ENCODE measurements at regions of chrX and their contacts with region 1.

Region 1: DNA sequence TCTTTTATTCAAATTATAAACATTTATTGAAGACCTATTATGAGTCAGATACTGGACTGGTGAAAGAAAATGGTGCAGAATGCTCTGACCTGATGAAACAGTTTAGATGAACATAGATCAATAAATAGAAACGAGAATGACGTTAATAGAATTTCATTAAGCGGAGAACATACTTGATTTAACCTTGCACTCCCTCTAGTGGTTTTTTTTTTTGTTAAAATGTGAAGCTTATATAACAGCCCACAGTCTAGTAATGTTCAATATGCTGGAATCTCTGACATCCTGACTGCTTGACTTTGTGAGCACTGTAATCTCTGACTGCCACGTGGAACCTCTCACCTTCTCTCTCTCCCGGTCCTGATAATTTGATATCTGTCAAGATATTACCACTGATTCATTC is 32.3 kb downstream of the HDAC8 start:
- DNase-seq: no peak
- ATAC-seq: no peak
- H3K4me3 Mint-ChIP-seq: no peak overlapping the region
- H3K27ac Mint-ChIP-seq: no peak overlapping the region
- H3K4me1 Mint-ChIP-seq: no peaks in the 10 kb centered on the region
- H3K27me3 Mint-ChIP-seq: no peaks in the 10 kb centered on the region
- CTCF ChIP-seq: peak; percentile 24

Region 2: DNA sequence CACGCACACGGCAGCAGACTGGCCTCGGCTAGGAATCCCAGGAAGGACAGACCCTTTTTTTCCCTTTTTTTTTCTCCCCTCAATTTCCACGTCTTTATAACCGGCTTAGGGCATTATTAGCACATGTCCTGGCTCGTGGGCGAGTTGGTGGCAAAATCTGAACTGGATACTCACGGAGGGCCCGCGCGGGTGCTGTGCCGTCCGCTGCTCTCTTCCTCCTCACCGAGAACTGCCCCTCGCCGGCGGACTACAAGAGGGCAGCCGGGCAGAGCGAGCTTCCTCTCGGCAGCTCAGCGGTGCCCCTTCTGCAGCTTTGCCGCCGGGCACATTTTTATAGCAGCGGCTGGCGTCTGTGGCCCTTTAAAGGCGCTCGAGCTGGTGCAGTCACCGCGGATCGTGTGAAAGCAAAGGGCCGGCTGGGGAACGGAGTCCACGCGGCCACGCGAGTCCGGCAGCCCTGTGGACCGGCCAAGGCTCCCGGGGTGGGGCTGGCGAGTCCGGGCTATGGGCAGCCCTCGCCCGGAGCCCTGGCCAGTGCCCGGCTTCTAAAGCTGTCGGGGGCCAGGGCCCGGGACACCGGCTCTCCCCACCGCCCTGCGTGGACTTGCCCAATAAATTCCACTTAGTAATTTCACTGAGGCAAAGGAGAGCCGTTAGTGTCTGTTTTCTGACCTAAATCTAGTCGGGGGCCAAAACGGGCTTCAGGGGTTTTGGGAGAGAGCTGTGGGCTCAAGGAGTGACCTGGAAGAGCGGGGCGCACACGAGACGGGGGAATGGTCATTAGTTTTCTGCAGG is 233.3 kb before region 1 on chrX:
- CTCF ChIA-PET with region 1: no interaction called
- POLR2A ChIA-PET with region 1: no interaction called
- intact Hi-C with region 1: loop called (anchors 10 kb)
- DNase-seq: peak; percentile 27
- ATAC-seq: peak; percentile 27
- H3K4me3 Mint-ChIP-seq: peak overlapping the region; percentile 68
- H3K27ac Mint-ChIP-seq: no peak overlapping the region
- H3K4me1 Mint-ChIP-seq: peaks cover 21% of the 10 kb centered on the region
- H3K27me3 Mint-ChIP-seq: peaks cover 48% of the 10 kb centered on the region
- CTCF ChIP-seq: no peak

Measured in activated CD8-positive, alpha-beta T cell treated with anti-CD3 and anti-CD28 coated beads for 36 hours (primary cell).